ENCODE measurements at regions of chr16 and their contacts with region 1.

Region 1: GRCh38 chr16:49921791-49922456 is 66.0 kb upstream of the ZNF423 start:
- DNase-seq: peak; percentile 60
- H3K4me3 Mint-ChIP-seq: no peak overlapping the region
- H3K27ac Mint-ChIP-seq: no peak overlapping the region
- H3K4me1 Mint-ChIP-seq: no peaks in the 10 kb centered on the region
- H3K27me3 Mint-ChIP-seq: peaks cover 21% of the 10 kb centered on the region
- CTCF ChIP-seq: peak; percentile 67

Region 2: GRCh38 chr16:49407873-49408550 is 513.9 kb before region 1 on chr16:
- CTCF ChIA-PET with region 1: interaction called, 45 read pairs
- POLR2A ChIA-PET with region 1: interaction called, 4 read pairs
- intact Hi-C with region 1: loop called (anchors 1 kb)
- DNase-seq: peak; percentile 79
- H3K4me3 Mint-ChIP-seq: no peak overlapping the region
- H3K27ac Mint-ChIP-seq: no peak overlapping the region
- H3K4me1 Mint-ChIP-seq: no peaks in the 10 kb centered on the region
- H3K27me3 Mint-ChIP-seq: no peaks in the 10 kb centered on the region
- CTCF ChIP-seq: peak; percentile 91

Region 3: DNA sequence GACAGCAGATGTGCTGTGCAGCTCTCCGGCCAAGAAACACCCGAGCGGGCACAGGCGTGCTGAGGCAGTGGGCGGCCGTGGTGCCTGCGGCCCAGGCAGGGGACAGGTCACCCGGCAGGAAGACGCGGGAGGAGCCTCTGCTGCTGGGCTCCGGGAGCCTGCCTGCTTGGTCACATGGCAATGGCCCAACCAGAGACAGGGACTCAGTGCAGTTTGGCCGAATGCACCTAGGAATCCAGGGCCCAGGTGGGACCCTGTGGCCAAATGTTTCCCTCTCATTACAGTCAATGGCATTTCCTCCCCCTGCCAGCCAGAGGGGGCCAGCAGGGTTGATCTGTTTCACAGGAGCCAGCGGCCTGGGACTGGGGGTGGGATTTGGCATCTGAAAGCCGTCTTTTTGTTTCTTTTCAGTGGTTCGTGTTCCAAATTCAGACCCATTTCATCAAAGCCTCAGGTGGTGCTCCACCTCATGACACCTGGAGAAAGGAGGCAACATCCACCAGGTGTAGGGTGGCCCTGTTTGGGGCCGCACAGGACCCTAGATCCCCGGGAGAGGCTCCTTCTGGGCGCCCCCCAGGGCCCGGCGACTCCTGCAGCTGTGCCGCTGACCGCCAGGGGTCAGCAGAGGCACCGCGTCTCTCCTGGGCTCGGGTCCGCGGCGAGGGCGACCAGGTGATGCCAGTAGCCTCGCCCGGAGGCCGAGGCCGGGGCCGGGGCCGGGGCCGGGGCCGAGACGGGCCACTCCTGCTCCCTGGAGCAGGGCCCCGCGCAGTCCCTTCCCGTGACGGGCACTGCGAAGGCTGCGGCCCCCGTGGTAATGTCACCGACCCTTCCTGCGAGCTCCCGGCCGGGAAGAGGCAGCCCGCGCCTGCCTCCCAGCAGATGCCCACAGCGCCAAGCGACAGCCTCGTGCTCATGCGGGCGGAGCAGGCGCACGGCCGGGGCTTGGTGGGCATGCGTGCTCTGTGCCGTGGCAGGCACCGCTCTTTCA is 429.9 kb before region 1 on chr16:
- CTCF ChIA-PET with region 1: no interaction called
- POLR2A ChIA-PET with region 1: interaction called, 3 read pairs
- intact Hi-C with region 1: loop called (anchors 5 kb)
- DNase-seq: peak; percentile 22
- H3K4me3 Mint-ChIP-seq: peak overlapping the region; percentile 63
- H3K27ac Mint-ChIP-seq: no peak overlapping the region
- H3K4me1 Mint-ChIP-seq: no peaks in the 10 kb centered on the region
- H3K27me3 Mint-ChIP-seq: peaks cover 34% of the 10 kb centered on the region
- CTCF ChIP-seq: peak; percentile 81

Region 4: DNA sequence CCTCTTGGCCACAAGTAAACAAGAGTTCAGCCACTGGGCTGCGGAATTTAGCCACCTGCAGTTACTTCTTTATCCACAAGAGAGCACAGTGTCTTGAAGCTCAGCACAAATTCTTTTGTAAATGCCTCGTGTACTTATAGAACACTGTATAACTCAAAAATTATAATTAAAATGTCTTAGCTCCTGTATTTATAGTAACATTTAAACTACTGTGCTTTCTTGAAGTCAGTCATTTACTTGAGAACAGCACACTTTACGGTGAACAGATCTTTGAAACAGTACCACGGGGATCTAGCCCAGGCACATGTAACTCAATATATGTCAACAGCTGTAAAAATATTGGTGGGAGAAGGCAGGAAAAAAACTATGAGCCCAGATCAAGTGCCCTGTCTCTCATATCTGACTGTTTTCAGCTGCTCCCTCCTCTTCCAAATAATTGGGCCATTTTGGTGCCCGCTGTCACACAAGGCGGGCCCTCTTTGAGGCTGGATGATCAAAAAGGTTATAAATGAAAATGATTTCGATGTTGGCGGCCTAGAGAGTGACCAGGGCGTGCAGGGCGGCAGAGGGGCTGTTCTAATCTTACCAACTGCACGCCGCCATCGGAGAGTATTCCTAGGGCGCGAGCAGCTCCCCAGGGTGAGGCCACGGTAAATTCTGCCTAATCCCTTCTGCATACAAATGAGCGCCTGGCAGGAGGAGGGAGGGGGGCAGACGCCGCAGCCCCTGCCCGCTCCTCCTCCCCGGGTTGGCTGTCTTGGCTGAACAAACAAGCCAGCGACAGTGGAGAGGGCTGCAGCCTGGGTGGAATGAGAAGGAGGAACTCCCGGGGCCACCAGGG is 365.1 kb before region 1 on chr16:
- CTCF ChIA-PET with region 1: interaction called, 36 read pairs
- POLR2A ChIA-PET with region 1: no interaction called
- intact Hi-C with region 1: loop called (anchors 1 kb)
- DNase-seq: no peak
- H3K4me3 Mint-ChIP-seq: no peak overlapping the region
- H3K27ac Mint-ChIP-seq: no peak overlapping the region
- H3K4me1 Mint-ChIP-seq: no peaks in the 10 kb centered on the region
- H3K27me3 Mint-ChIP-seq: peaks cover 17% of the 10 kb centered on the region
- CTCF ChIP-seq: peak; percentile 35

Region 5: DNA sequence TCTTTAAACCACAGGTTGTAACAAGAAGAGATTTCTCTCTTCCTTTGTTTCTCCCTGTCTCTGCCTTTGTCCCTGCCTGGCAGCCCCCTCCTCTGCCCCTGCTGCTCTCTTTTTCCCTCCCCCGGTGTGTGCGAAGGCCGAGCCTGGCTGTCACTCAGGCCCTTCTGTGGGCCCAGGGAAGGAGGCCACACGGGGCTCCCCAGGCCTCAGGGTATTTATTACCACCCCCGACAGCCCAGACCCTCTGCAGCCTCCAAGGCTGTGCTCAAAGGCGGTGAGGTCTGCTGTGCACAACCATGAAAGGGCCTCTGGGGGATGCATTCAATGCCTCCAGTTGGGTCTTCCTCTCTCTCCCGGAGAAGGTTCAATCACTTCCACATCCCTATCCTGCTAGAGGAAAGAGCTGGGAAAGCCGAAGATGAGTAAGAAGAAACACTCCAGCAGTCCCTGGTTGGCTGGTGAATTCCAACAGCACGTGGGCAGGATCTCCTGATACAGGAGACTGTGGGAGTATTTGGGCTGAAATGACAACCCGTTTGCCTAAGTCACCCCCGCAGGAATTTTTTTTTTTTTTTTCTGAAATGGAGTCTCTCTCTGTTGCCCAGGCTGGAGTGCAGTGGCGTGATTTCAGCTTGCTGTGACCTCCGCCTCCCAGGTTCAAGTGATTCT is 100.2 kb before region 1 on chr16:
- CTCF ChIA-PET with region 1: no interaction called
- POLR2A ChIA-PET with region 1: no interaction called
- intact Hi-C with region 1: no loop called
- DNase-seq: no peak
- H3K4me3 Mint-ChIP-seq: no peak overlapping the region
- H3K27ac Mint-ChIP-seq: no peak overlapping the region
- H3K4me1 Mint-ChIP-seq: no peaks in the 10 kb centered on the region
- H3K27me3 Mint-ChIP-seq: peaks cover 46% of the 10 kb centered on the region
- CTCF ChIP-seq: no peak

Region 6: DNA sequence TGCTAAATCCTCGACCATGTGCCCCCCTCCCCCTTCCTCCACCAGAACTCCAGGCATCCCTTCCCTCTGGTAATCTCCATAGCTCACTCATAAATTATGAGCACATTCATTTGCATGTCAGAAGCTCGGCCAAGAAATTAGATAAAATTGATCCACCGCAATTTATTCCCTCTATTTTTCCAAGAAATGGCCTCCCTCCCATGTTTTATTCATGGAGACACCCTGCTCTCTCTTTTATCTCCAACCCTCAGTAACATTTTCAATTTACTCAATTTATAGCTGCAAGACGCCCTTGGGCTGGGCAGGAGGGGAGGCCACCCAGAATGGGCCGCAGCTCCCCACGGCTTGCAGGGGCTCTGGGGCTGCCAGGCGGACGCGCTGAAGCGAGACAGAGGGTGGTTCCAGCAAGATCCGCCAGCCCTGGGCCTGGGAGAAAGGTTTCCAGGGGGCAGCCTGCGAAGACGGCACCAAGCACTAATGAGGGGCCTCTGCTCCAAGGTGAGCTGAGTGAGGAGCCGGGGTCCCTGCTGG is 11.3 kb before region 1 on chr16:
- CTCF ChIA-PET with region 1: interaction called, 28 read pairs
- POLR2A ChIA-PET with region 1: no interaction called
- intact Hi-C with region 1: no loop called
- DNase-seq: no peak
- H3K4me3 Mint-ChIP-seq: no peak overlapping the region
- H3K27ac Mint-ChIP-seq: no peak overlapping the region
- H3K4me1 Mint-ChIP-seq: no peaks in the 10 kb centered on the region
- H3K27me3 Mint-ChIP-seq: peaks cover 29% of the 10 kb centered on the region
- CTCF ChIP-seq: no peak

Region 7: DNA sequence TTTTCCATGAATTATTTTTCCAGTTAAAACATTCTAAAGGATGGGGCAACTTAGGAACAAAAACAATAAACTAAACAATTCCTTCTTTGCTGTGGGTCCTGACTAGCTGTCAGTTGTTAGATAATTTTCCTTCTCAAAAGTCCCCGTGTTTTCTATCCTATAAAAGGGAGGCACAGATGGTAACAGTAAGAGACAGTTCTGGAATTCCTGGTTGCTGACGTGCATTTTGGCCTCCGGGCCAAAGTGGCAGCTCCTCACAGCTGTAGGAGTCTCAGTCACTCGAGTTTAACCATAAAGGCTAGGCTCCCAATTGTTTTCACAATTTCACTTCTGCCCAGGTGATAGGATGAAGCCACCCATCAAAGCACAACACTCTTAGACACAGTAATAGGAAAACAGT is 11.0 kb after region 1 on chr16:
- CTCF ChIA-PET with region 1: interaction called, 29 read pairs
- POLR2A ChIA-PET with region 1: interaction called, 4 read pairs
- intact Hi-C with region 1: no loop called
- DNase-seq: peak; percentile 4
- H3K4me3 Mint-ChIP-seq: no peak overlapping the region
- H3K27ac Mint-ChIP-seq: no peak overlapping the region
- H3K4me1 Mint-ChIP-seq: peaks cover 6% of the 10 kb centered on the region
- H3K27me3 Mint-ChIP-seq: peaks cover 15% of the 10 kb centered on the region
- CTCF ChIP-seq: no peak